ENCODE measurements at regions of chr5 and their contacts with region 1.

Region 1: GRCh38 chr5:180209137-180209581 is at the start of gene RASGEF1C:
- DNase-seq: peak; percentile 70 to 76
- ATAC-seq: peak; percentile 88 to 90
- H3K4me3 ChIP-seq: peak within 1 kb of the TSS; percentile 61
- H3K27ac ChIP-seq: peak within 1 kb of the TSS; percentile 59 to 91
- H3K4me1 ChIP-seq: 0 out of 3 replicates have a peak, but pooled peaks cover 3% of the 10 kb centered on the region
- CTCF ChIP-seq: peak; percentile 81
- EP300 ChIP-seq: no peak
- POLR2A ChIP-seq: no peak
- RAD21 ChIP-seq: peak in 1 of 2 experiments; percentile 23; a peak in 2 of 5 replicates
- polyA plus RNA-seq, gene RASGEF1C: 0.16 TPM in 1 of 2 replicates, not detected in the other

Region 2: DNA sequence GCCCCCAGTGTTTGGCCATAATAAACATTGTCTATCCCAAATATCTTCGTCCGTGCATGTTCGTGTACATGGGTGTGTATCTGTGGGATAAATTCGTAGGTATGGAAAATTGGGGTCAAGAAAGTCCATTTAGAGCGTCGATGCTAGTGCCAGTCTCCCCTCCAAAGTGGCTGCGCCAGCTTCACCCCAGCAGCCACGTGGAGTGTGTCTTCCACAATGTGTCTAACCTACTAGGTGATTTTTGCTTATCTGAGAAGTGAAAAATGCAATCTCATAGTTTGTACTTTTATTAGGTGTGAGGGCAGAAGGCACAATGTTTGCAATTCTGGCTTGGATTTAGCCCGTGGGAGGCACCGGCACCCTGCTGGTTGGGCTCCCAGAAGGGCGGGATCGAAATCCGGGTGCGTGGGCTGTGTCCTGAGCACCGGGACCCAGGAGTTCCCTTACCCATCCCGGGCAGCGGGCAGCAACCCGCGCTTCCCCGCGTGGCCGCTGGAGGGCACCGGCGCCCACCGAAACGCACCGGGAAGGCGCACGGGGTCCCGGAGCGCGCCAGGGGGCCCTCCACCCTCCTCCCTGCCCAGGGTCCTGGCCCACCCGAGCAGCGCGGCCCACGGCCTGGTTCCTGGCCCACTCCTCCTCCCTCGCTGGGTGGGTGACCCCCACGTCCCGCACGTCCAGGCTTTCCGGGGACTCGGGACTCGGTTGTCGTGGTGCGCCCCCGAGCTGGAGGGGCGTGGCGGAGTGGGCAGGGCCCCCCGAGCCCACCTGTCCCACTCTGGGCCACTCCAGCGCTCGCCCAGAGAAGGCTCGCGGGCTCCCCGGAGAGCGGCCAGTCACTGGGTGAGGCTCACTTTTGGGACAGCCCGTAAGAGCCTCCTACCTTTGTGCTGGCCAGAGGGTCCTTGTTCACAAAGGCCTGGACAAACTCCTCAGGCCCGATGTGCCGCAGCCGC is 82.2 kb before region 1 on chr5:
- CTCF ChIA-PET with region 1: interaction called, 32 read pairs
- POLR2A ChIA-PET with region 1: no interaction called
- DNase-seq: peak; percentile 42 to 66
- ATAC-seq: peak; percentile 69 to 90
- H3K4me3 ChIP-seq: peak overlapping the region; percentile 37
- H3K27ac ChIP-seq: peak overlapping the region in 1 of 2 experiments; percentile 55; a peak in 2 of 6 replicates
- H3K4me1 ChIP-seq: peaks cover 9% of the 10 kb centered on the region; the same call in 1 of the 3 replicates
- CTCF ChIP-seq: peak; percentile 49
- EP300 ChIP-seq: no peak
- POLR2A ChIP-seq: no peak
- RAD21 ChIP-seq: peak; percentile 60 to 73

Region 3: DNA sequence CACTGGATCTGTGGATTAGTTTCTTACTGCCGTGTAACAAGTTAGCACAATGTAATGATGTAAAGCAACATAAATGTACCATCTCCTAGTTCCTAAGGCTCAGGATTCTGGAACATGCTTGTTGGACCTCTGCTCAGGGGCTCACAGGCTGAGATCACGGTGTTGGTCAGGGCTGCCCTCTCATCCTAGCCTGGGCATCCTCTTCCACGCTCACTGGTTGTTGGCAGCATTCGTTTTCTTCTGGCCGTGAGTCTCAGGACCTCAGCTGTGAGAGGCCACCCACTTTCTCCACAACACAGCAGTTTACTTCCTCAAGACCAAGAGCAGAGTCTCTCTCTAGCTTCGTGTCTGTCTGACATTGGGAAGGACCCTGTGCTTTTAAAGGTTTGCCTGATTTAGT is 17.4 kb before region 1 on chr5:
- CTCF ChIA-PET with region 1: interaction called, 11 read pairs
- POLR2A ChIA-PET with region 1: no interaction called
- DNase-seq: no peak
- ATAC-seq: no peak
- H3K4me3 ChIP-seq: no peak overlapping the region
- H3K27ac ChIP-seq: no peak overlapping the region
- H3K4me1 ChIP-seq: no peaks in the 10 kb centered on the region
- CTCF ChIP-seq: no peak
- EP300 ChIP-seq: no peak
- POLR2A ChIP-seq: no peak
- RAD21 ChIP-seq: no peak

Region 4: GRCh38 chr5:180222056-180222455 is 12.9 kb after region 1 on chr5:
- CTCF ChIA-PET with region 1: interaction called, 10 read pairs
- POLR2A ChIA-PET with region 1: no interaction called
- DNase-seq: no peak
- ATAC-seq: no peak
- H3K4me3 ChIP-seq: no peak overlapping the region
- H3K27ac ChIP-seq: no peak overlapping the region
- H3K4me1 ChIP-seq: no peaks in the 10 kb centered on the region
- CTCF ChIP-seq: no peak
- EP300 ChIP-seq: no peak
- POLR2A ChIP-seq: no peak
- RAD21 ChIP-seq: no peak

Measured in A549 (cell line).